ENCODE measurements at regions of chr3 and their contacts with region 1.

Region 1: GRCh38 chr3:170089862-170090600 is 52.2 kb downstream of the GPR160 start:
- DNase-seq: no peak
- H3K4me3 ChIP-seq: no peak overlapping the region
- H3K27ac ChIP-seq: no peak overlapping the region
- H3K4me1 ChIP-seq: no peaks in the 10 kb centered on the region
- H3K27me3 ChIP-seq: no peaks in the 10 kb centered on the region
- CTCF ChIP-seq: no peak

Region 2: GRCh38 chr3:169744366-169745054 is 345.5 kb before region 1 on chr3:
- intact Hi-C with region 1: no loop called
- DNase-seq: no peak
- H3K4me3 ChIP-seq: no peak overlapping the region
- H3K27ac ChIP-seq: no peak overlapping the region
- H3K4me1 ChIP-seq: no peaks in the 10 kb centered on the region
- H3K27me3 ChIP-seq: no peaks in the 10 kb centered on the region
- CTCF ChIP-seq: peak in 2 of 3 experiments; percentile 29 to 63

Region 3: DNA sequence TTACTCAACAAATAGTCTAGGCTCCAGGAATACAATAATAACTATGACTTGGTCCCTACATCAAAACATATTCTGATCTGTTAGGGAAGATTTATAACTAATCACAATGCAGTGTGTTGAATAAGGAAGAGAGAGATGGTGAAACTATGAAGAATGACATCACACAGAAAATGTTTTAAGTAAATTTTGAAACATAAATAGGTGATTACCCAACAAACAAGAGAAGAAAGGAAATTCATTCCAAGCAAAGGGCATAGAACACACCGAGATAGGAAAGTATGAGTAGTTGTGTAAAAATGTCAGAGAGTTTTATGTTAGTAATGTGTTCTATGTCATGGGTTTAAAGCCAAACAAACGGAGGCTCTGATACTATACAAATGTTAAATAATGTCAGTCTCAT is 110.0 kb before region 1 on chr3:
- intact Hi-C with region 1: loop called (anchors 10 kb)
- DNase-seq: no peak
- H3K4me3 ChIP-seq: no peak overlapping the region
- H3K27ac ChIP-seq: no peak overlapping the region
- H3K4me1 ChIP-seq: no peaks in the 10 kb centered on the region
- H3K27me3 ChIP-seq: no peaks in the 10 kb centered on the region
- CTCF ChIP-seq: no peak

Region 4: GRCh38 chr3:170429050-170429449 is 339.0 kb after region 1 on chr3:
- intact Hi-C with region 1: no loop called
- DNase-seq: no peak
- H3K4me3 ChIP-seq: no peak overlapping the region
- H3K27ac ChIP-seq: no peak overlapping the region
- H3K4me1 ChIP-seq: no peaks in the 10 kb centered on the region
- H3K27me3 ChIP-seq: no peaks in the 10 kb centered on the region
- CTCF ChIP-seq: no peak